ENCODE measurements at regions of chr19 and their contacts with region 1.

Region 1: DNA sequence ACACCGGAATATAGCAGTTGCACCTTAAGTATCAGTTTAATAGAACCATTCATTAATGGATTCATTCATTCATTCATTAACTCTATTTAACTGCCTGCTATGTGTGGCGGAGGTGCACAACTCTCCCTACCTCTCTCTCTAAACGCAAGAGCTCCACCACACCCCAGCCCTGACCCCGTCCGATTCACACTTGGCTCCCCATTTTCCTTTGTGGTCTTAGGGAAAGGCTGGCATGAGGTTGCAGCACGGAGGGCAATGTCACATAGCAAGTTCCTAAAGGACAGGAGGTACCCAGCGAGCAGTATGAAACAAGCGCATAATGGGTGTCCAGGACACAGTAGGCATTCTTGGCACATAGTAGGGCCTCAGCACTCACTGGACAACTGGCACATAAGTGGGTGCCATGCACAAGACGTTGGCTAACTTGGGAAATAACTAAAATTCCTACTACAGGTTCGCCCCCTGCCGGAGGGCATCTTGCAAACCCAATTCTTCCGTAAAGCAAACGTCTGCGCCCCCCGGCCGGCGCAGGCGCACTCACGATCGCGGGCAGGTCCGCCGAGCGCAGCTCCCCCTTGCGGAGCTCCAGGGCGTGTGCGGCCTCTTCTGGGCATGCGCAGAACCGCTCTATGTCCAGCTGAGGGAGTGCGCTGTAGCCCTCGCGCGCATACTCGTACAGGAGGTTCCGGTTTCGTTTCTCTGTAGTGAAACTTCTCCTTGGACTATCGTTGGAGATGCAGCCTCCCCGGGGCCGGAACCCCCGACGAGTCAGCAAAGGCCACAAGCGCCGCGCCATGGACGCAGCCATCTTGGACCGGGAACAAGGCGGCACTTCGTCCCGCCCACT is at the start of gene SARS2:
- DNase-seq: peak; percentile 96 to 99 (median 98)
- ATAC-seq: peak; percentile 74
- H3K4me3 ChIP-seq: peak within 1 kb of the TSS; percentile 71
- H3K27ac ChIP-seq: peak within 1 kb of the TSS; percentile 92
- H3K4me1 ChIP-seq: peaks cover 0 to 18% of the 10 kb centered on the region in 2 experiments; a peak in 3 of 5 replicates
- H3K27me3 ChIP-seq: no peaks in the 10 kb centered on the region
- CTCF ChIP-seq: peak; percentile 98 to 99 (median 98)
- EP300 ChIP-seq: peak; percentile 21; the same call in 1 of the 2 replicates
- POLR2A ChIP-seq: peak; percentile 96
- RAD21 ChIP-seq: peak; percentile 81 to 83
- polyA plus RNA-seq, gene SARS2: 3.1 to 7.0 TPM

Region 2: DNA sequence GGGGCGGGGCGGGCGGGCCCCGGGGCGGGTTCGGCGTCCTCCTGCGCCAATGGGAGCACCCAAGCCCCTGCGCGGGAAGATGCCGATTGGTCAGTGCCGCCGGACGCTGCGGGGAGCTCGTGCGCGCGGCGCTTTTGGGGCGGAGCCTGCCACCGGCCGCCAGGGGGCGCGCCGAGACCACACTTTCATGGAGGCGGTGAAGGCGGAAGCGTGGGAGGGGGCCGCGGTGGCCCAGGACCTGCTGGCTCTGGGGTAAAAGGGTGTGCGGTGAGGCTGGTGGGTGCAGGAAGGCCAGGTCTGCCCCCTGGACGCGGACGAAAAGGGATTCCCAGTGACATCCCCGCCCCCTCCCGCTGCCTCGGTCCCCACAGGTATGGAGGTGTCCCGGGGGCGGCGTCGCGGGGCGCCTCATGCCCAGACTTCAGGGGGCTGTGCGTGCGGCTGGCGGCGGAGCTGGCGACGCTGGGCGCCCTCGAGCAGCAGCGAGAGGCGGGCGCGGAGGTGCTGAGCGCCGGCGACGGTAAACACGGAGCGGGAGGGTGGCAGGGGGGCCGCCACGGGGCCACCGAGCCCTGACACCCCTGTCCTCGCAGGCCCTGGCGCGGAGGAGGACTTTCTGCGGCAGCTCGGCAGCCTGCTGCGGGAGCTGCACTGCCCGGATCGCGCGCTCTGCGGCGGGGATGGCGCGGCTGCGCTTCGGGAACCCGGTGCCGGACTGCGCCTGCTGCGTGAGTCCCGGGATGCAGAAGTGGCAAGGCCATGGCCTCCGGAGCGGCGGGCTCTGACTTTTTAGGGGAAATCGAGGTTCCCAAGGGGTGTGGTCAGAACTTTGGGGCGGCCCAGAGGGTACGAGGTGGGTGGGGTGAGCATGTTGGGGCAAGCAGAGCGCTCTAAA is 526.9 kb before region 1 on chr19 and contains the start of gene FAM98C:
- CTCF ChIA-PET with region 1: interaction called, 10 read pairs
- POLR2A ChIA-PET with region 1: interaction called, 3 read pairs
- in situ Hi-C with region 1: no loop called
- intact Hi-C with region 1: no loop called
- DNase-seq: peak; percentile 99 to 100 (median 100)
- ATAC-seq: peak; percentile 99
- H3K4me3 ChIP-seq: peak within 1 kb of the TSS; percentile 83
- H3K27ac ChIP-seq: peak within 1 kb of the TSS; percentile 89
- H3K4me1 ChIP-seq: peaks cover 6 to 33% of the 10 kb centered on the region in 2 experiments; a peak in 4 of 5 replicates
- H3K27me3 ChIP-seq: no peaks in the 10 kb centered on the region
- CTCF ChIP-seq: peak; percentile 91 to 95 (median 91)
- EP300 ChIP-seq: no peak
- POLR2A ChIP-seq: peak; percentile 69
- RAD21 ChIP-seq: peak; percentile 94 to 96
- polyA plus RNA-seq, gene FAM98C: 1.7 to 4.3 TPM

Region 3: DNA sequence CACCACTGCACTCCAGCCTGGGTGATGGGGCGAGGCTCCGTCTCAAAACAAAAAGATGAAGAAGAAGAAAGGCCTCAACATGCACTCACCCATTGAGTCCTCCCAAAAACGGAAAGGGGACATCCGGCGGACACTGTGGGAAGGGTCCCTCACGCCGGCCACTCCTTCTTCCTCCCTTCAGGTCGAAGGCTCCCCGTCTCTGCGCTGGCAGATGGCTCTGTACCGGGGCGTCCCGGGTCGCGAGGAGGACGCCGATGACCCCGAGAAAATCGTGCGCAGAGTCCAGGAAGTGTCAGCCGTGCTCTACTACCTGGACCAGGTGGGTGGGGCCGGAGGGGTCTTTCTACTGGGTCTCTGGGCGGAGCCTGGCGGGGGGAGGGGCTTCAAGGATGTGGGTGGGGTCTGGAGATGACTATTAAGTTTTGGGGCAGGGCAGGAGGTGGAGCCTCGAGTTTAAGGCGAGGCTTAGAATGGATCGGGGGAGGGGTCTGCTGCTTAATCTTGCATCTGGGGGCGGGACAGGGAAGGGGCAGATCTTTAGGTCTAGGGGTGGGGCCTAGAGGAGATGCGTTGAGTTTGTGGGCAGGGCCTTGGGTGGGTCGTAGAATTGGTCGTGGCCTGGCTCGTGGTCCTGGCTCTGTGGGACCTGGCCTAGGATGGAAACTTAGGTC is 402.6 kb before region 1 on chr19:
- CTCF ChIA-PET with region 1: no interaction called
- POLR2A ChIA-PET with region 1: no interaction called
- in situ Hi-C with region 1: loop called (anchors 10 kb)
- intact Hi-C with region 1: no loop called
- DNase-seq: peak; percentile 76 to 82 (median 76)
- ATAC-seq: peak; percentile 99
- H3K4me3 ChIP-seq: no peak overlapping the region
- H3K27ac ChIP-seq: no peak overlapping the region
- H3K4me1 ChIP-seq: peaks cover 5 to 22% of the 10 kb centered on the region in 2 experiments; a peak in 4 of 5 replicates
- H3K27me3 ChIP-seq: no peaks in the 10 kb centered on the region
- CTCF ChIP-seq: no peak
- EP300 ChIP-seq: no peak
- POLR2A ChIP-seq: no peak
- RAD21 ChIP-seq: no peak

Region 4: DNA sequence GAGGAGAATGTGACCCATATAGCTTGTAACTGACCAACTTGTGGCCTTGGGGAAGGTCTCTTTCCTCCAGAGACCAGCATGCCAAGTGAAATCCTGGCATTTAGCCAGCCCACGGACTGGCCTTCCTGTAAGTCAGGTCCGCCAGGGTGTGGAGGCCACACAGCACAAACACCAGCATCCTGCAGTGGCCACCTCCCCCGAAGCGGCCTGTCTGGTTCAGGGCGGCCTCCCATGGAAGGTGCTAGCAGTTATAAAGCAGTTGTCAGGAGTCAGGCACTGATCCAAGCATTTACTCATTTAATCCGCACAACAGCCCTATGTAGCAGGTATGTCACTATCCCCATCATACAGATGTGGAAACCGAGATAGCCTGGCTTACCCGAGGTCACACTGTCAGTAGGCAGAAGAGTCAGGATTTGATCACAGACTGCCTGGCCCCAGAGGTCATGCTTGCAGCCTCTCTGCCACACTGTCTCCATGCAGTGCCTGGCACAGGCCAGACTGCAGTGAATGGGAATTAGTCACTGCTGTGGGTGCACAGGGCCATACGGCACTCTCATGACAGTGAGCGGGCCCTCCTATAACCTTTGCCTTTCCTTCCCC is 222.5 kb before region 1 on chr19:
- CTCF ChIA-PET with region 1: no interaction called
- POLR2A ChIA-PET with region 1: no interaction called
- in situ Hi-C with region 1: no loop called
- intact Hi-C with region 1: no loop called
- DNase-seq: peak in 1 of 4 experiments; percentile 19
- ATAC-seq: no peak
- H3K4me3 ChIP-seq: no peak overlapping the region
- H3K27ac ChIP-seq: no peak overlapping the region
- H3K4me1 ChIP-seq: peaks cover 0 to 15% of the 10 kb centered on the region in 2 experiments; a peak in 1 of 5 replicates
- H3K27me3 ChIP-seq: no peaks in the 10 kb centered on the region
- CTCF ChIP-seq: no peak
- EP300 ChIP-seq: no peak
- POLR2A ChIP-seq: no peak
- RAD21 ChIP-seq: no peak

Region 5: DNA sequence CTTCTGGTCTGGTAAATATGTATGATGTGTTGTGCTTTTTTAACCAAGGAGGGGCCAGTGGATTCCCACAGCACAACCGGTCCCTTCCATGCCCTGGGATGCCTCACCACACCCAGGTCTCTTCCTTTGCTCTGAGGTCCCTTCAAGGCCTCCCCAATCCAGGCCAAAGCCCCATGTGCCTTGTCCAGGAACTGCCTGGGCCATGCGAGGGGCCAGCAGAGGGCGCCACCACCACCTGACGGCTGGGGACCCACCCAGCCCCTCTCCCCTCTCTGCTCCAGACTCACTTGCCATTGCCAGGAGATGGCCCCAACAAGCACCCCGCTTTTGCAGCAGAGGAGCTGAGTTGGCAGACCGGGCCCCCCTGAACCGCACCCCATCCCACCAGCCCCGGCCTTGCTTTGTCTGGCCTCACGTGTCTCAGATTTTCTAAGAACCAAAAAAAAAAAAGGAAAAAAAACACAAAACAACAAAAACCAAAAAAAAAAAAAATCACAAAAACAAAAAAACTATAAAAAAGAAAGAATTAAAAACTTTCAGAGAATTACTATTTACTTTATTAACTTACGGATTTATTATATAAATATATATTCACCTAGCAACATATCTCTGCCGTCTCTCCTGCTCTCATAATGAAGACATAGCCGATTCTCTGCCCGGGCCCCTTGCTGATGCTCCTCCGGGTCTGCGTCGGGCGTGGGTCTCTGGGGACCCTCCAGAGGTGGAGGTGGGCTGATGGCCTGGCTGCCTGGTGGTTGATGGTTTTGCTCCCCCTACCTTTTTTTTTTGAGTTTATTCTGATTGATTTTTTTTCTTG is 200.3 kb before region 1 on chr19:
- CTCF ChIA-PET with region 1: interaction called, 12 read pairs
- POLR2A ChIA-PET with region 1: interaction called, 4 read pairs
- in situ Hi-C with region 1: no loop called
- intact Hi-C with region 1: loop called (anchors 10 kb)
- DNase-seq: peak; percentile 66 to 87 (median 72)
- ATAC-seq: peak; percentile 91
- H3K4me3 ChIP-seq: no peak overlapping the region
- H3K27ac ChIP-seq: peak overlapping the region; percentile 49; the same call in 1 of the 3 replicates
- H3K4me1 ChIP-seq: peaks cover 19 to 61% of the 10 kb centered on the region in 2 experiments
- H3K27me3 ChIP-seq: no peaks in the 10 kb centered on the region
- CTCF ChIP-seq: peak; percentile 84 to 96 (median 88)
- EP300 ChIP-seq: no peak
- POLR2A ChIP-seq: no peak
- RAD21 ChIP-seq: peak; percentile 61 to 75

Region 6: GRCh38 chr19:38849860-38850435 is 80.2 kb before region 1 on chr19 and contains the start of gene HNRNPL:
- CTCF ChIA-PET with region 1: interaction called, 4 read pairs
- POLR2A ChIA-PET with region 1: interaction called, 5 read pairs
- in situ Hi-C with region 1: no loop called
- intact Hi-C with region 1: loop called (anchors 1 kb)
- DNase-seq: peak in 3 of 4 experiments; percentile 90 to 97 (median 93)
- ATAC-seq: peak; percentile 82
- H3K4me3 ChIP-seq: peak within 1 kb of the TSS; percentile 96
- H3K27ac ChIP-seq: peak within 1 kb of the TSS; percentile 99
- H3K4me1 ChIP-seq: peaks cover 16 to 41% of the 10 kb centered on the region in 2 experiments; a peak in 4 of 5 replicates
- H3K27me3 ChIP-seq: no peaks in the 10 kb centered on the region
- CTCF ChIP-seq: peak; percentile 40 to 64 (median 59)
- EP300 ChIP-seq: peak; percentile 29; the same call in 1 of the 2 replicates
- POLR2A ChIP-seq: peak; percentile 84
- RAD21 ChIP-seq: peak; percentile 17 to 20; a peak in 1 of 4 replicates
- polyA plus RNA-seq, gene HNRNPL: 39.5 to 51.4 TPM

Region 7: GRCh38 chr19:38977445-38978325 is 47.5 kb after region 1 on chr19:
- CTCF ChIA-PET with region 1: no interaction called
- POLR2A ChIA-PET with region 1: no interaction called
- in situ Hi-C with region 1: no loop called
- intact Hi-C with region 1: no loop called
- DNase-seq: no peak
- ATAC-seq: no peak
- H3K4me3 ChIP-seq: no peak overlapping the region
- H3K27ac ChIP-seq: no peak overlapping the region
- H3K4me1 ChIP-seq: peaks cover 13 to 25% of the 10 kb centered on the region in 2 experiments; a peak in 4 of 5 replicates
- H3K27me3 ChIP-seq: no peaks in the 10 kb centered on the region; a peak in 1 of 5 replicates
- CTCF ChIP-seq: no peak
- EP300 ChIP-seq: no peak
- POLR2A ChIP-seq: no peak
- RAD21 ChIP-seq: no peak

Measured in K562 (cell line).